ENCODE measurements at regions of chr10 and their contacts with region 1.

Region 1: GRCh38 chr10:101031128-101031795 is at the starts of genes PDZD7 and SFXN3:
- DNase-seq: peak; percentile 97 to 99
- H3K4me3 ChIP-seq: peak within 1 kb of the TSS; percentile 76
- H3K4me3 Mint-ChIP-seq: peak within 1 kb of the TSS; percentile 80
- H3K27ac Mint-ChIP-seq: peak within 1 kb of the TSS; percentile 93
- H3K4me1 ChIP-seq: peaks cover 33% of the 10 kb centered on the region
- H3K4me1 Mint-ChIP-seq: peaks cover 17% of the 10 kb centered on the region
- H3K27me3 ChIP-seq: no peaks in the 10 kb centered on the region
- H3K27me3 Mint-ChIP-seq: no peaks in the 10 kb centered on the region
- CTCF ChIP-seq: no peak
- total RNA-seq, gene PDZD7: 1.4 and 1.5 TPM in 2 replicates
- total RNA-seq, gene SFXN3: 23.4 and 30.3 TPM in 2 replicates

Region 2: DNA sequence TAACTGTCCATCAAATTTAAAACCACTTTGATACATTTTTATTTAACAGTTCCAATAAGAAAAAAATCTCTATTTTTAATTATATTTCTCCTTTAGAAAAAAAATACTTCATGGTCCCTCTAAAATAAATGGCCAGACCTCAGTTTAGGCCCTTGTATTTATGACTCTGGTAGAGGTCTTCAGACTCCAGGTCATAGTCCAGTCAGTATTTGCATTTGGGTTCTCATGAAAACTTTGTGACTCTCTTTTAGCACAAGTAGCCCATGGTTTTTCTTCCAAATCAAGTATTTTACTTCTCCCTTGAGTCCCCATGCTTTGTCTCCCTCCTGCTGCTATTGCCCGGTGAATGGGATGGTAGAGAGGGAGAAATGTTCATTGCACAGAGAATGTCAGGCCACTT is 67.4 kb before region 1 on chr10:
- CTCF ChIA-PET with region 1: no interaction called
- POLR2A ChIA-PET with region 1: no interaction called
- intact Hi-C with region 1: no loop called
- DNase-seq: no peak
- H3K4me3 ChIP-seq: no peak overlapping the region
- H3K4me3 Mint-ChIP-seq: no peak overlapping the region
- H3K27ac Mint-ChIP-seq: no peak overlapping the region
- H3K4me1 ChIP-seq: peaks cover 2% of the 10 kb centered on the region
- H3K4me1 Mint-ChIP-seq: peaks cover 15% of the 10 kb centered on the region
- H3K27me3 ChIP-seq: no peaks in the 10 kb centered on the region
- H3K27me3 Mint-ChIP-seq: no peaks in the 10 kb centered on the region
- CTCF ChIP-seq: no peak

Region 3: GRCh38 chr10:100998991-100999741 is 32.1 kb before region 1 on chr10:
- CTCF ChIA-PET with region 1: interaction called, 11 read pairs
- POLR2A ChIA-PET with region 1: interaction called, 5 read pairs
- intact Hi-C with region 1: no loop called
- DNase-seq: peak; percentile 79 to 89
- H3K4me3 ChIP-seq: peak overlapping the region; percentile 94
- H3K4me3 Mint-ChIP-seq: peak overlapping the region; percentile 81
- H3K27ac Mint-ChIP-seq: peak overlapping the region; percentile 74
- H3K4me1 ChIP-seq: peaks cover 18% of the 10 kb centered on the region
- H3K4me1 Mint-ChIP-seq: peaks cover 14% of the 10 kb centered on the region
- H3K27me3 ChIP-seq: no peaks in the 10 kb centered on the region
- H3K27me3 Mint-ChIP-seq: no peaks in the 10 kb centered on the region
- CTCF ChIP-seq: peak; percentile 81 to 97

Region 4: GRCh38 chr10:101018600-101019439 is 12.4 kb before region 1 on chr10:
- CTCF ChIA-PET with region 1: interaction called, 23 read pairs
- POLR2A ChIA-PET with region 1: interaction called, 5 read pairs
- intact Hi-C with region 1: no loop called
- DNase-seq: peak; percentile 87 to 90
- H3K4me3 ChIP-seq: no peak overlapping the region
- H3K4me3 Mint-ChIP-seq: no peak overlapping the region
- H3K27ac Mint-ChIP-seq: no peak overlapping the region
- H3K4me1 ChIP-seq: peaks cover 11% of the 10 kb centered on the region; the same call in 1 of the 2 replicates
- H3K4me1 Mint-ChIP-seq: peaks cover 12% of the 10 kb centered on the region
- H3K27me3 ChIP-seq: no peaks in the 10 kb centered on the region
- H3K27me3 Mint-ChIP-seq: no peaks in the 10 kb centered on the region
- CTCF ChIP-seq: peak; percentile 60 to 85

Region 5: DNA sequence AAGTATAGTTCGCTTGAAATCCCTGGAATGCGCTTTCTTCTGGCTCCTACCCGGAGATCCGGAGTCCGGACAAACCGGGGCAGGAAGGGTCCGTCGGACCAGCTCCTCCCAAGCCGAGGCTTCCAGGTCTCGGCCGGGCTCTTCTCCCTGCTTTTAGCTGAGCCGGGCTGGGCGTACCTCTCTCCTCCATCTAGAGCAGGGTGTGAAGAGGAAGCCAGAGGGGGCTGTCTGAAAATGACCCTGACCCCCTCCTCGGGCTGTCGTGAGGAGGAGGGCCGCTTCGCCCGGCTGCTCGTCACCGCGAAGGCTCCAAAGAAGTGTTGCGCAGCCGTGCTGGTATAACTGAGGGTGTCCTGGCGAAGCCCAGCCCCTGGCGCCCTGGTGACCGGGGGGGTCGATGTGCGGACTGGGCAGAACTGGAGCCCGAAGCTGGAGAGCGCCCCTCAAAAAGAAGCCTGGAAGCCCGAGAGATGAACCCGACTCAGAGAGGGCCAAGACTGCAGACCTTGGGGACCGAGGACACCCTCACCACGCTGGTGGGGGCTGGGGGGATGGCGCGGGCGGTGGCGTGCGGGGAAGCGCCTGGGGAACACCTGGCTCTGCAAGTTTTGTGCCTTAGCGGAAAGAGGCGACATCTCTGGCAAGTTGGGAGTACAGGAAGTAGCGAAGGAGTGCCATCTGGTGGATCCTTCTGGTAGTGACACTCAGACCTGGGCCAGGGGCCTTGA is 36.3 kb after region 1 on chr10:
- CTCF ChIA-PET with region 1: interaction called, 16 read pairs
- POLR2A ChIA-PET with region 1: no interaction called
- intact Hi-C with region 1: loop called (anchors 5 kb)
- DNase-seq: peak; percentile 90
- H3K4me3 ChIP-seq: peak overlapping the region; percentile 70
- H3K4me3 Mint-ChIP-seq: peak overlapping the region; percentile 96
- H3K27ac Mint-ChIP-seq: peak overlapping the region; percentile 98
- H3K4me1 ChIP-seq: peaks cover 30% of the 10 kb centered on the region
- H3K4me1 Mint-ChIP-seq: peaks cover 22% of the 10 kb centered on the region
- H3K27me3 ChIP-seq: no peaks in the 10 kb centered on the region
- H3K27me3 Mint-ChIP-seq: no peaks in the 10 kb centered on the region
- CTCF ChIP-seq: peak; percentile 86 to 92

Region 6: DNA sequence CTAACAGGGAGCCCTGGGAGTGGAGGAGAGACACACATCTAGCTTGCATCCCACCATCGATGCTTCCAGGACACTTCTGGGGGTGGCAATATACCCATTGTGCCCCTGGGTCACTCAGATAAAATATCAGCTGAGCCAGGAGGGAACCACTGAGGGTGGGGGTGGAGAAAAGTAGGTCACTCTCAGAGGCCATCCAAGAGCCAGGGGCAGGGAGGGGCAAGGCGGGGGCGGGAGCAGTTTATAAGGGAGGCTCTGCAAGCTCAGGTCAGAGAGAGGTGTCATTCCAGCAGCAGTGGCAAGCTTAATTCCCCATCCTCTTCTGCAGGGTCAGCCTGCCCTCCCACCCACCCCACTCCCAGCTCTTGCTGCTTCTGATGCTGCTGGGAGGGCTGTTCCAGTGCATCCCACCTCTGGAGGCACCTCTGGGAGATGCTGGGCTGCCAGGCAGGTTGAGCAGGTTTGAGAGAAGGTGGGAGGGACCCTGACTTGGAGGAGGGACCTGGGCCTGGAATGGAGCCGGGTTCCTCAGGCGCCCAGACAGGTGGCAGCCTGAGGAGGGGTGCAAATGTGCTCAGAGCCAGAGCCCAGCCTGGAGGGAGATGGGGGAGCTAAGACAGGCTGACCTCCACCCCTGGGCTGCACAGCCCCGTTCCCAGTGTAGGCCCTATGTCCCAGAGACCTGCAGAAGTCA is 79.7 kb after region 1 on chr10:
- CTCF ChIA-PET with region 1: interaction called, 5 read pairs
- POLR2A ChIA-PET with region 1: interaction called, 13 read pairs
- intact Hi-C with region 1: no loop called
- DNase-seq: peak; percentile 76 to 78
- H3K4me3 ChIP-seq: no peak overlapping the region
- H3K4me3 Mint-ChIP-seq: peak overlapping the region; percentile 44
- H3K27ac Mint-ChIP-seq: peak overlapping the region; percentile 92
- H3K4me1 ChIP-seq: peaks cover 30% of the 10 kb centered on the region
- H3K4me1 Mint-ChIP-seq: peaks cover 36% of the 10 kb centered on the region
- H3K27me3 ChIP-seq: no peaks in the 10 kb centered on the region
- H3K27me3 Mint-ChIP-seq: no peaks in the 10 kb centered on the region
- CTCF ChIP-seq: no peak